Posterior cingulate gyrus (tissue), 11 donors: ENCODE measurements at regions of chr3 and their contacts with region 1.

Region 1: DNA sequence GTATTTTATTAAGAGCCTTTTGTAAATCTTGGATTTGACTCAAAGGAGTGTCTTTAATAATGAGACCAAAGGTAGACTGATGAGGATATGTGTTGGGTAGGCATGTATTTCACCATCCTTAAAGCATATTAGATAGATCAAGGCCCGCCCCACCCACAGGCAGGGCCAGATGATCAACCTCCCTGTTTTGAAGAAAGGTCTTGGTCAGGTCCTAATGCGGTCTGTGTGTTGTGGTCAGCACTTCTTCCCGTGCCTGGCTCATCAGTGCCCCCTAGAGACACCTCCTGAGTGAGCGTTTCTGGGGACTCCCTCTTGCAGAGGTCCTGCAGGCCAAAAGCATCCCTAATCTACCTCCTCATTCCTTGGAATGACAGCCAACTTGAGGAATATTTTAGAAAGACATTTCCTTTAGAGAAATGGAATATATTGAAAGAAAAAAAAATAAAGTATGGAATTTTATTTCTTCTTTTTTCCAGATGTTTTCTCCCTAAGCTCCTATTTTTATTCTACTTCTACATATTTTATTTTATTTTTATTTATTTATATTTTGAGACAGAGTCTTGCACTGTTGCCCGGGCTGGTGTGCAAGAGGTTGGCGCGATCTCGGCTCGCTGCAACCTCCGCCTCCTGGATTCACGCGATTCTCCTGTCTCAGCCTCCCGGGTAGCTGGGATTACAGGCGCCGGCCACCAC is 6.0 kb downstream of the TM4SF4 start:
- DNase-seq: peak in 7 of 10 donors; percentile 46 to 92 (median 67)

Region 2: DNA sequence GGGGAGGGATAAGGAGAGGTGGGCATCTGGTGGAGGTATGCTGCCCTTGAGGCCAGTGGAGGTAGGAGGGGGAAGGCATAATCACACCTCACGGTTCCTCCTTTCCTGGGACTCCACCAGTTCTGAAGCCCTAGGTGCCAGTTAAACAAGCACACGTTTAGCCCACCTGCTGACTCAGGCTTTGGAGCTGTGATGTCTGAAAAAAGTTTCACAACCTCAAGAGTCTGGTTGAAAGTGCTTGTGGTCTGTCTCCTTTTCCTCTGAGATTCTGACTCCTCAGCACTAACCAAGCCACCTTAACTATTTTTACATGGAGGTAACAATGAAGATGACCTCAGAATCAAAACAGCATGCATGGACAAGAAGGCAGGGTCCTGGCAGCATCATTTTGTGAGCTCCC is 328.1 kb before region 1 on chr3:
- intact Hi-C with region 1: no loop called
- DNase-seq: no peak

Region 3: GRCh38 chr3:149352556-149352955 is 127.9 kb before region 1 on chr3:
- intact Hi-C with region 1: loop called (anchors 2 kb)
- DNase-seq: peak in 7 of 10 donors; percentile 11 to 86 (median 20)

Region 4: GRCh38 chr3:149393345-149394160 is 86.9 kb before region 1 on chr3:
- intact Hi-C with region 1: loop called (anchors 2 kb)
- DNase-seq: peak in 8 of 10 donors; percentile 15 to 86 (median 54)